Activated T-helper 1 cell treated with anti-CD3 and anti-CD28 coated beads, Interleukin-12 subunit alpha, Interleukin-12 subunit beta, Interleukin-2, Interleukin-4 antibody, amounts not matched to agents 30 ng/mL and 10 ng/mL and 1 ng/mL, durations not matched to agents 14 hours and 24 hours and 36 hours (primary cell): ENCODE measurements at regions of chr3 and their contacts with region 1.

Region 1: DNA sequence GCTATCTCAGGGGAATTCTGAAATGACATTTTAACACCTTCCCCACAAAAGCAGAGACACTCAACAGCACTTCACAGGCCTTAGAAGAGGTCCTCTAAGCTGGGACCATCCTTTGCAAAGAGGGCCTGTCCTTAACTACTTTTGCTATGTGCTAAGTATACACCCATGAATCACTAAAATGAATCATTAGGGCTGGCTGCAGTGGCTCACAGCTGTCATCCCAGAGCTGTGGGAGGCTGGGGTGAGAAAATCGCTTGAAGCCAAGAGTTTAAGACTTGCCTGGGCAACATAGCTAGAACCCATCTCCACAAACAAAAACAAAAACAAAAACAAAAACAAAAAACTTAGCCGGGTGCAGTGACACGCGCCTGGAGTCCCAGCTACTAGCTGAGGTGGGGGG is 53.9 kb upstream of the MELTF start:
- DNase-seq: no peak
- H3K4me3 Mint-ChIP-seq: no peak overlapping the region
- H3K27ac Mint-ChIP-seq: peak overlapping the region; percentile 16
- H3K4me1 Mint-ChIP-seq: peaks cover 20% of the 10 kb centered on the region
- H3K27me3 Mint-ChIP-seq: no peaks in the 10 kb centered on the region

Region 2: GRCh38 chr3:197186887-197187588 is 103.6 kb after region 1 on chr3:
- intact Hi-C with region 1: loop called (anchors 10 kb)
- DNase-seq: peak; percentile 5
- H3K4me3 Mint-ChIP-seq: no peak overlapping the region
- H3K27ac Mint-ChIP-seq: no peak overlapping the region
- H3K4me1 Mint-ChIP-seq: peaks cover 13% of the 10 kb centered on the region
- H3K27me3 Mint-ChIP-seq: no peaks in the 10 kb centered on the region

Region 3: GRCh38 chr3:197541756-197542539 is 458.5 kb after region 1 on chr3:
- intact Hi-C with region 1: no loop called
- DNase-seq: no peak
- H3K4me3 Mint-ChIP-seq: no peak overlapping the region
- H3K27ac Mint-ChIP-seq: no peak overlapping the region
- H3K4me1 Mint-ChIP-seq: peaks cover 6% of the 10 kb centered on the region
- H3K27me3 Mint-ChIP-seq: no peaks in the 10 kb centered on the region